HCT116 (cell line): ENCODE measurements at regions of chr6 and their contacts with region 1.

Region 1: DNA sequence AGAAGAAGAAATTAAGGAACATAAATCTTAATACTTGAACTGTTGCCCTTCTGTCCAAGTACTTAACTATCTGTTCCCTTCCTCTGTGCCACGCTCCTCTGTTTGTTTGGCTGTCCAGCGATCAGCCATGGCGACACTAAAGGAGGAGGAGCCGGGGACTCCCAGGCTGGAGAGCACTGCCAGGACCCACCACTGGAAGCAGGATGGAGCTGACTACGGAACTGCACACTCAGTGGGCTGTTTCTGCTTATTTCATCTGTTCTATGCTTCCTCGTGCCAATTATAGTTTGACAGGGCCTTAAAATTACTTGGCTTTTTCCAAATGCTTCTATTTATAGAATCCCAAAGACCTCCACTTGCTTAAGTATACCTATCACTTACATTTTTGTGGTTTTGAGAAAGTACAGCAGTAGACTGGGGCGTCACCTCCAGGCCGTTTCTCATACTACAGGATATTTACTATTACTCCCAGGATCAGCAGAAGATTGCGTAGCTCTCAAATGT is 17.1 kb downstream of the IRF4 start:
- DNase-seq: peak; percentile 53
- ATAC-seq: peak; percentile 100
- H3K4me3 ChIP-seq: peak overlapping the region; percentile 10 to 13; a peak in 2 of 4 replicates
- H3K27ac ChIP-seq: no peak overlapping the region
- H3K4me1 ChIP-seq: peaks cover 0 to 9% of the 10 kb centered on the region in 2 experiments; a peak in 1 of 4 replicates
- H3K27me3 ChIP-seq: peaks cover 22% of the 10 kb centered on the region; the same call in 1 of the 2 replicates
- CTCF ChIP-seq: peak; percentile 59 to 97 (median 87)
- POLR2A ChIP-seq: no peak
- RAD21 ChIP-seq: peak; percentile 83

Region 2: GRCh38 chr6:188821-189655 is 219.6 kb before region 1 on chr6:
- CTCF ChIA-PET with region 1: interaction called, 35 read pairs
- POLR2A ChIA-PET with region 1: no interaction called
- RAD21 ChIA-PET with region 1: interaction called in 1 of 2 experiments, 5 read pairs
- intact Hi-C with region 1: loop called (anchors 1 kb)
- DNase-seq: peak; percentile 72
- ATAC-seq: peak; percentile 98
- H3K4me3 ChIP-seq: no peak overlapping the region
- H3K27ac ChIP-seq: no peak overlapping the region
- H3K4me1 ChIP-seq: no peaks in the 10 kb centered on the region
- H3K27me3 ChIP-seq: no peaks in the 10 kb centered on the region
- CTCF ChIP-seq: peak; percentile 93 to 95 (median 95)
- POLR2A ChIP-seq: no peak
- RAD21 ChIP-seq: peak; percentile 95

Region 3: DNA sequence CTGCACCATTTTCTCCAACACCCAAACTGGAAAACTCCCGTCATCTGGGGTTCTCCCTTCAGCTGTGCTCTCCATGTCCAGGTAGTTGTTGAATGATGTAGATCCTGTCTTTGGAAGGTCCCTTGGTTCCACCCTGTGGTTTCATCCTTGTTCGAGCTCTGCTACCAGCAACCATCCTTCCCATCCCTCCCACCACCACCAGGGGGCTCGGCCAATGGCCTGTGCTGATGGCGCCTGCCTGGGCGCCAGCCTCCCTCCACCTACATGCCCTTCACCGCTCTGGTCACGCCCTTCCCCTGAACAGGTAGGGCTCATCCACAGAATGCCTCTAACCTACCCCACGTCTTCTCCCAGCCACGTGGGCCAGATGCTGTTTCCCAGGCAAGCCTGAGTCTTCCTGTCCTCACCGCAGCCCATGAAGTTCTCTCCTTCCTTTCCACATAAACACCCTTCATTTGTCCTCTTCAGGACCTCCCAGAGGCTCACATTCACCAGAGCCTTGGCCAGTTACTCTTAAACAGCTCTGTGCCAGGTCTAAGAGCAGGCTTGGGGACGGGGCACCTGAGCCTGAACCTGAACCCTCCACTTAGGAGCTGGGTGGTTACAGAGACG is 191.5 kb before region 1 on chr6:
- CTCF ChIA-PET with region 1: interaction called, 10 read pairs
- POLR2A ChIA-PET with region 1: no interaction called
- RAD21 ChIA-PET with region 1: no interaction called
- intact Hi-C with region 1: no loop called
- DNase-seq: peak; percentile 18
- ATAC-seq: peak; percentile 95
- H3K4me3 ChIP-seq: no peak overlapping the region
- H3K27ac ChIP-seq: no peak overlapping the region
- H3K4me1 ChIP-seq: no peaks in the 10 kb centered on the region; a peak in 1 of 4 replicates
- H3K27me3 ChIP-seq: peaks cover 5% of the 10 kb centered on the region; the same call in 1 of the 2 replicates
- CTCF ChIP-seq: peak; percentile 48 to 80 (median 73); a peak in 5 of 6 replicates
- POLR2A ChIP-seq: no peak
- RAD21 ChIP-seq: peak; percentile 43

Region 4: GRCh38 chr6:291697-292505 is 116.8 kb before region 1 on chr6 and contains the start of gene DUSP22:
- CTCF ChIA-PET with region 1: interaction called, 3 read pairs
- POLR2A ChIA-PET with region 1: no interaction called
- RAD21 ChIA-PET with region 1: no interaction called
- intact Hi-C with region 1: loop called (anchors 5 kb)
- DNase-seq: peak; percentile 45
- ATAC-seq: peak; percentile 85
- H3K4me3 ChIP-seq: peak within 1 kb of the TSS; percentile 61 to 69
- H3K27ac ChIP-seq: peak within 1 kb of the TSS; percentile 93
- H3K4me1 ChIP-seq: peaks cover 11 to 17% of the 10 kb centered on the region in 2 experiments; a peak in 3 of 4 replicates
- H3K27me3 ChIP-seq: peaks cover 10% of the 10 kb centered on the region; the same call in 1 of the 2 replicates
- CTCF ChIP-seq: no peak
- POLR2A ChIP-seq: peak; percentile 54
- RAD21 ChIP-seq: no peak
- total RNA-seq, gene DUSP22: 19.2 TPM